Left colon (tissue), 2 donors: ENCODE measurements at regions of chr1 and their contacts with region 1.

Region 1: DNA sequence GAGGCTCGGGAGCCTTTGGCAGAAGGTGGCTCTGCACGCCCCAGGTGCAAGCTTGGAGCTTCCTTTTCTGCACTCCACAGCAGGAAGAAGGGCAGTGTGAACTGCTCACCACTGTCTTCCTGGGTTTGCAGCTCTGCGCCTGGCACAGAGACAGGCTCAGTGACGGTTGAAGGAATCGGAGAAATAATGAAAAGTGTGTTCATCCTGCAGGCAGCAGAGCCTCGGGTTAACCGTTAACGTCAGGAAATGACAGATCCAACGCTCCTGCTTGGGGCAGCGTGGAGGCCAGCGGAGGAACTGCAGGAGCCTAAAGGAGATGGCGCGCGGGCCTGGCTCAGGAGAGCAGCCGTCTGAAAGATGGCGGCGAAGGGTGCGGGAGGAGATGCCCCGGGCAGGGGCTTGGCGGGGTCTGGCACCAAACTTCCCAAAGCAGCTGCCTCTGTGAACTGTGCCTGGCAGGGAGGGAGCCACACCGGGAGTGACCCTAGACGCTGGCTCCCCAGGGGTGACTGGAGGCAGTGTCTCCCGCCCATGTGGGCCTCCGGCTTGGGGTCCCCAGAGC is 10.9 kb upstream of the SAMD11 start:
- DNase-seq: peak in 1 of 2 donors; percentile 29
- ATAC-seq: peak; percentile 80

Region 2: GRCh38 chr1:975896-976683 is 63.3 kb after region 1 on chr1:
- intact Hi-C with region 1: loop called in 1 of 2 experiments (anchors 10 kb)
- DNase-seq: peak; percentile 53 to 74
- ATAC-seq: peak; percentile 87